ENCODE measurements at regions of chr1 and their contacts with region 1.

Region 1: DNA sequence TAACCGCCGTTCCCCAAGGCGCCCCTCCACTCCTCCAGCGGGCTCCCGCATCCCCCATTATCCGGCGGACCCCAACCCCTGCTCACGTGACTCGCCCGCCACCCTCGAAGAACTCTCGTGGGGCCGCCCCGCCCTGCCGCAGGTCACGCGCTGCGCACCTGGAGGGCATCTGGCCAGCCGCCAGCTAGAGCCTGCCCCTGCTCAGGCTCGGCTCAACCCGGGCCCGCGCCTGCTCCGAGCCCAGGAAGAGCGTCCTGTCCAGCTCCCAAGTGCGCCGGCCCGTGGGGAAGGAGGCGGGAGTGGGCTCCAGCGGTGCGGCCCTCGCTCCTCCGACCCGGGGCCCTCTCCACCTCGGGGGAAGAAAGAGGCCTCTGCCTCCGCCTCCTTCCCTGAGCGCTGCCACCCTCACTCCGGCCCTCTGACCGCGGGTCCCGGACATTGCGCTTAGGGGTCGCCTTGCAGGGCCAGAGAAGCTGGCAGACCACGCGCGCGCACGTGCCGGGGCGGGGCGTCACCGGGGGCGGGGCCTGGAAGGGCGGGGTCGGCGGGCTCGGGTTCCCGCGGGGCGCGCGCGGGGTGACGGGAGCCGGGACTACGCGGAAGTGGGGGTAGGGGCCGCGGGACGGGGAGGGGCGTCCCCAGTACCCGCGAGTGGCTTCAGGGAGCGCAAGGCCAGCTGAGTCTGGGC is 28.4 kb downstream of the HMGN2 start:
- DNase-seq: peak; percentile 77
- H3K4me3 ChIP-seq: peak overlapping the region; percentile 55 to 75 (median 62)
- H3K27ac ChIP-seq: peak overlapping the region; percentile 59
- H3K4me1 ChIP-seq: peaks cover 16% of the 10 kb centered on the region
- H3K27me3 ChIP-seq: no peaks in the 10 kb centered on the region
- CTCF ChIP-seq: no peak

Region 2: DNA sequence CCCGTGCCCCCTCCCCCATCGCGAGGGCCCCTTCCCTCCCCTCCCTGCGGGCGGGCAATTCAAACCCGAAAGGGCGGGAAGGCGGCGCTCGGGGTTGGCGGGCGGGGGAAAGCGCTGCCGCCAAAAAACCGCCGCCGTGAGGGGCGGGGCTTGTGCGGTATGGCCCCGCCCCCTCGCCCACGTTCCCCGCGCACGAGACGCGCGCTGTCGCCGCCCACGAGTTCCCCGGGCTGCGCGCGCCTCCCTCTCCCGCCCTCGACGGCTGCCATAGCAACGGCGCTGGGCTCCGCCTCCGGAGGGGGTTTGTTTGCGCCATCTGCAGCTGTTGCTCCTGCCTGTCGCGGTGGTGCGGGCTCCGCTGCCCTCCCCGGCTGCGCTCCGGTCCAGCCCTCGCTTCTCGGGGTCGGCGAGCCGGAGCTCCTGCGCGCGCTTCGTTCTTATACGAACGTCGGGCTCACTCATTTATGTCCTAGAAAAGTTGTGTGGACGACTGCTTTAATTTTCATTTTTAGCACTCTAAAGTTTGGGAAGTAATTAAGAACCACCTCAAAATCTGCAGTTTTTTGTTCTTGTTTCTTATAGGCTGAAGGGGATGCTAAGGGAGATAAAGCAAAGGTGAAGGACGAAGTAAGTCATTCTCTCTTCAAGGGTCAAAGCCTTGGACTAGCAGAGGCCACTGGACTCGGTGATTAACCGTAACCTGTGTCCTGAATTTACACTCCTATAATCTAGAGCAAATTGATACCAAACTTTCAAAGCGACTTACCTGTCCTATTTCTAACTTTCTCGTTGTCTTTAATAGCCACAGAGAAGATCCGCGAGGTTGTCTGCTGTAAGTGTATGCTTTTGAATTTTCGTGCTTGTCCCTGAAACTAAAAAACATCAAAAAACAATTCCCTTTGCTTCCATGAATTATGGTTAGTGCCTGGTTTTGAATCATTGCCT is 27.5 kb before region 1 on chr1:
- CTCF ChIA-PET with region 1: no interaction called
- dilution Hi-C with region 1: loop called (anchors 5 kb)
- in situ Hi-C with region 1: no loop called
- intact Hi-C with region 1: no loop called
- DNase-seq: peak; percentile 92
- H3K4me3 ChIP-seq: peak overlapping the region; percentile 78 to 88 (median 81)
- H3K27ac ChIP-seq: peak overlapping the region; percentile 65
- H3K4me1 ChIP-seq: peaks cover 39% of the 10 kb centered on the region
- H3K27me3 ChIP-seq: no peaks in the 10 kb centered on the region
- CTCF ChIP-seq: no peak

Region 3: DNA sequence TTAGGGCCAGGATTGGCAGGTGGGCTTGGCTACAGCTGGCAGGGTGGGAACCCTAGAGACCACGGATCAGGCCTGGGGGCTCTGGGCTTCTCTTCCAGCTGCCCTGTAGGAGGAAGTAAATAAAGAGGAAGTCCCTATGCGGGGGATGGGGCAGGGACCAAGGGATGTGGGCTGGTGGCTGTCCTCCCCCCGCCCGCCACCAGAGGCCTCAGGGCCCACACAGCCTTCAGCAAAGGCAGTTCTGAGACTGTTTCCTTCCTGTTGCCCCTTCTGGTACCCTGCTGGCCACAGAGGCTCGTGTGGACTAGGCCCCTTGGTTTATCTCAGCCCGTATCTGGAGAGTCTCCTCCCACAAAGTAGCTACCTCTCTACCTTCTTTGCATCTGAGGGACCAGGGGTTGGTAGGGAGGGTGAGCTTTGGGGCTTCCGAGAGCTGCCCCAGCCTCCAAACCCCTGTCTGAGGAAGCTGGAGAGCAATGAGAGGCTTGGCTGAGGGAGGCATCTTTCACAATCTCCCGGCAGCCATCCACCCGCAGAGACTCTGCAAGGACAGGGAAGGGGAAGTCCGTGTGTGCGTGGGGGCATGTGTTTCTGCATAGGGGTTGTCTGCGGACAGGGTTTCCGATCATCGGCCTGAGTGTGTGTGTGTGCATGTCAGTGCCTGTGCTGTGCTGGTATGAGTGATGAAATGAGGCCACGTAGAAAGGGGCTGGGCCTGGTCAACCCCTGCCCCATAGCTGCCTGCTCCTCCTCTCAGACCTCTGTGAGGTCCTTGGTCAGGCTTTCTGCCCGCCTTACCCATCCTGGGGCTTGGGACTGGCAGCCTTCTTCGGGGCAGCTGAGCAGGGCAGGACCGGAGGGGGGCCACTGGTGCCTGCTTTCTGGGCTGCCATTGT is 41.4 kb after region 1 on chr1:
- CTCF ChIA-PET with region 1: no interaction called
- dilution Hi-C with region 1: loop called (anchors 5 kb)
- in situ Hi-C with region 1: no loop called
- intact Hi-C with region 1: loop called (anchors 1 kb)
- DNase-seq: peak; percentile 92
- H3K4me3 ChIP-seq: no peak overlapping the region
- H3K27ac ChIP-seq: peak overlapping the region; percentile 49
- H3K4me1 ChIP-seq: peaks cover 60% of the 10 kb centered on the region
- H3K27me3 ChIP-seq: no peaks in the 10 kb centered on the region
- CTCF ChIP-seq: peak; percentile 24 to 31

Region 4: GRCh38 chr1:26602378-26602959 is 101.8 kb after region 1 on chr1:
- CTCF ChIA-PET with region 1: interaction called, 3 read pairs
- dilution Hi-C with region 1: no loop called
- in situ Hi-C with region 1: no loop called
- intact Hi-C with region 1: loop called (anchors 1 kb)
- DNase-seq: peak; percentile 48
- H3K4me3 ChIP-seq: no peak overlapping the region
- H3K27ac ChIP-seq: no peak overlapping the region
- H3K4me1 ChIP-seq: no peaks in the 10 kb centered on the region
- H3K27me3 ChIP-seq: no peaks in the 10 kb centered on the region
- CTCF ChIP-seq: peak; percentile 81 to 82

Region 5: GRCh38 chr1:26787706-26788514 is 287.3 kb after region 1 on chr1 and contains the start of gene PIGV:
- CTCF ChIA-PET with region 1: no interaction called
- dilution Hi-C with region 1: no loop called
- in situ Hi-C with region 1: no loop called
- intact Hi-C with region 1: loop called (anchors 1 kb)
- DNase-seq: peak; percentile 78
- H3K4me3 ChIP-seq: peak within 1 kb of the TSS; percentile 61 to 80 (median 74)
- H3K27ac ChIP-seq: peak within 1 kb of the TSS; percentile 93
- H3K4me1 ChIP-seq: peaks cover 26% of the 10 kb centered on the region
- H3K27me3 ChIP-seq: no peaks in the 10 kb centered on the region
- CTCF ChIP-seq: peak in 1 of 2 donors; percentile 12
- total RNA-seq, gene PIGV: 18.0 to 19.2 TPM

Region 6: DNA sequence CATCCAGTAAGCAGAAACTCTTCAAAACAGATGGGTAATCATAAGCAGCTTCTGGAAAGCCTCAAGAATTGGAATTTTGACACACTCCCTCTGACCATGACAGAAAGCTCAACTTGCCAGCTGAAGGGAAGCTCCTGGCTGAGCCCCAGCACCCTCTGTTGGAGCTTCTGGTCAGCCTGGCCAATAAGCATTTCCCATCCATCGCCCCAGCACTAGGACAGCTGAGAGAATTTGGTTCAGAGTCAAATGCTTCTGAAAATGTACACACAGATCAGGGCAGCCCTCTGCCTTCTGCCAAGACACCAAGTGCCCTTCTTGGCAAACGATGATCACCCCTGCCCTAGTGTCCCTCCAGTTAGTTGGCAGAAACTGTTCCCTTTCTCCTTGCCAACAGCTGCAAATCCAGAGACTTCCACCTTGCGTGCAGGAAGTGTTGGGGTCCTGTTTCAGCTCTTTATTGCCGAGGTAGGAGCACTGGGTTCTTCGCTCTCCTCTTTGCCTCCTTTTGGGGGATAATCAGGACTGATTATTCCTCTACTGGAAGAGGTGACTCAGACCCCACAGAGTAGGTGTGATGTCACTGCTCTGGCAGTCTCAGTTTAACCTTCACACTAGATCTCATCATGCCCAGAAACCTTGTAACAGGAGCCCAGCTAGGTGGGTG is 299.0 kb after region 1 on chr1:
- CTCF ChIA-PET with region 1: no interaction called
- dilution Hi-C with region 1: no loop called
- in situ Hi-C with region 1: no loop called
- intact Hi-C with region 1: no loop called
- DNase-seq: peak; percentile 83
- H3K4me3 ChIP-seq: no peak overlapping the region
- H3K27ac ChIP-seq: no peak overlapping the region
- H3K4me1 ChIP-seq: peaks cover 12% of the 10 kb centered on the region
- H3K27me3 ChIP-seq: no peaks in the 10 kb centered on the region
- CTCF ChIP-seq: no peak

Region 7: GRCh38 chr1:26889551-26890466 is 389.2 kb after region 1 on chr1 and contains the start of gene GPN2:
- CTCF ChIA-PET with region 1: no interaction called
- dilution Hi-C with region 1: loop called (anchors 10 kb)
- in situ Hi-C with region 1: no loop called
- intact Hi-C with region 1: no loop called
- DNase-seq: peak; percentile 68
- H3K4me3 ChIP-seq: peak within 1 kb of the TSS; percentile 72 to 86 (median 74)
- H3K27ac ChIP-seq: peak within 1 kb of the TSS; percentile 86
- H3K4me1 ChIP-seq: peaks cover 30% of the 10 kb centered on the region
- H3K27me3 ChIP-seq: no peaks in the 10 kb centered on the region
- CTCF ChIP-seq: no peak
- total RNA-seq, gene GPN2: 14.7 to 48.3 TPM